Activated CD4-positive, alpha-beta T cell treated with anti-CD3 and anti-CD28 coated beads, Interleukin-2, amount 10 ng/mL, durations not matched to agents 24 days and 14 days (primary cell): ENCODE measurements at regions of chr11 and their contacts with region 1.

Region 1: DNA sequence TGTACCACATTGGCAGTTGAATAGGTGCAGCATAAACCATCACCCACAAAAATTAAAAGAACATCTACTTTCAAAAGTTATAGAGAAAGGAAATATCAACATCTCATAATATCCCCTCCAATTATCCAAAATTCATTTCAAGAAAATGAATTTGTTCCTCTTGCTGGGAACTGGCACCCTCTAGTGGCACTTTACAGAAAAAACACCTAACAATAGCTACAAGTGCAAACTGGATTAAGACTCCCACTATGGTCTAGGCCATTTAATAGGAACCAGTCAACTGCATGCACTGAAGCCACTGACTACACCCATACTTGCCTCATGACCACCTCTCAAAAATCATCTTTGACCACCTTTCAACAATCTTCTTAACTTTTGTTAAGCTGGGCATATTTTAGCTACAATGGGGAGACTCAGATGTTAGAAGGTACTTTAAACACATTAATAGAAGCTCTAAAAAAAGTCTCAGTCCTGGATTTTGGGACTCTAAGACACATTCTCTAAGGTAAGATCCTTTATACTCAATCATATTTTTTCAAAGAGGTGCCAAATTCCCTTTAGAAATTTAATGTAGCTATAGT is 17.3 kb downstream of the TRAF6 start:
- DNase-seq: peak; percentile 79
- H3K4me3 Mint-ChIP-seq: no peak overlapping the region
- H3K27ac Mint-ChIP-seq: no peak overlapping the region
- H3K4me1 Mint-ChIP-seq: peaks cover 16% of the 10 kb centered on the region
- H3K27me3 Mint-ChIP-seq: no peaks in the 10 kb centered on the region

Region 2: GRCh38 chr11:36306888-36307287 is 185.9 kb before region 1 on chr11:
- intact Hi-C with region 1: loop called (anchors 1 kb)
- DNase-seq: peak; percentile 72
- H3K4me3 Mint-ChIP-seq: no peak overlapping the region
- H3K27ac Mint-ChIP-seq: no peak overlapping the region
- H3K4me1 Mint-ChIP-seq: peaks cover 4% of the 10 kb centered on the region
- H3K27me3 Mint-ChIP-seq: peaks cover 8% of the 10 kb centered on the region

Region 3: GRCh38 chr11:36447972-36448371 is 44.8 kb before region 1 on chr11:
- intact Hi-C with region 1: loop called (anchors 1 kb)
- DNase-seq: no peak
- H3K4me3 Mint-ChIP-seq: no peak overlapping the region
- H3K27ac Mint-ChIP-seq: no peak overlapping the region
- H3K4me1 Mint-ChIP-seq: peaks cover 30% of the 10 kb centered on the region
- H3K27me3 Mint-ChIP-seq: peaks cover 4% of the 10 kb centered on the region